ENCODE measurements at regions of chrX and their contacts with region 1.

Region 1: GRCh38 chrX:109709129-109709631 is 23.9 kb downstream of the ACSL4 start:
- DNase-seq: no peak
- H3K4me3 ChIP-seq: no peak overlapping the region
- CTCF ChIP-seq: no peak

Region 2: GRCh38 chrX:109760241-109760922 is 51.2 kb after region 1 on chrX:
- CTCF ChIA-PET with region 1: no interaction called
- POLR2A ChIA-PET with region 1: no interaction called
- DNase-seq: no peak
- H3K4me3 ChIP-seq: no peak overlapping the region
- CTCF ChIP-seq: no peak

Region 3: DNA sequence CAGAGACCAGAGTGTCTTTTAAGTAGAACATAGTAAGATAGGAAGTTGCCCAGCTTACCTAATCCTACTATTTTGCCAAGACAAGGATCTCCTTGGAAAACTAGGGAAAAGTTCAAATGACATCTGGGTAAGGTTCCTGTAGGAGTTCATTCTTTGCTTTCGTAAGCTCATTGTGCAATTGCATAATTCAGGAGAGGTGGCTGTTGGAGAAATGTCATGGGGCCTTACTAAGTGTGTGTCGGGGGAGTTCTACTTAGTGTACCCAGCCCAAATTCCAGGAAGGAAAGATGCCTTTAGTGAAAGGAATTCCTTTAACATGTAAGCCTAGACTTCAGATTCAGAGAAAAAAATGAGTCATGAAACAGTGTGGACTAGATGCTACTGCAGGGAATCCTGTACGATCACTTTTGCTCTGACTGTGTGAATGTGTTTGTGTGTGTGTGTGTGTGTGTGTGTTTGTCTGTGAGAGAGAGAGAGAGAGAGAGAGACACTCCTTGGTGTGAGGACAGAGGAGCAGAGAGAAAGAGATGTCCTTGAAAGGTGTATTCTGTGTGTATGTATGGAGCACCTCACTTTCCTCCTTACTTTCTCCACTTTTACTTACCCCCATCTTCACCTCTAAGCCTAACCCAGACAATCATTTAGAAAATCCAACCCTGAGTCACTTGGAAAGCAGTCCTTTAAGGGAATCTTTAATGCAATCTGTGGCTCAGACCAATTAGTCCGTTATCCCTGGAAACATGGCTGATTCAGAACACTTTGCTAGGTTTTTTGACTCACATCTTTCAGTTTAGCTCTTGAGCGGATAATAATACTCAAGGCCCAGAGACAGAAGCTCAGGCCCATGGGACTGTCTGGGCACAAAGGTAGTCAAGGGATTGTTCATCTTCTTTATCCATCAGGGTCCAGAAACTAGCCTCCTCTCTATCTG is 138.3 kb after region 1 on chrX:
- CTCF ChIA-PET with region 1: interaction called, 158 read pairs
- POLR2A ChIA-PET with region 1: no interaction called
- DNase-seq: peak; percentile 80
- H3K4me3 ChIP-seq: no peak overlapping the region
- CTCF ChIP-seq: no peak